Activated CD4-positive, alpha-beta T cell treated with anti-CD3 and anti-CD28 coated beads, Interleukin-2, amount 10 ng/mL, durations not matched to agents 7 days and 5 days (primary cell): ENCODE measurements at regions of chr4 and their contacts with region 1.

Region 1: DNA sequence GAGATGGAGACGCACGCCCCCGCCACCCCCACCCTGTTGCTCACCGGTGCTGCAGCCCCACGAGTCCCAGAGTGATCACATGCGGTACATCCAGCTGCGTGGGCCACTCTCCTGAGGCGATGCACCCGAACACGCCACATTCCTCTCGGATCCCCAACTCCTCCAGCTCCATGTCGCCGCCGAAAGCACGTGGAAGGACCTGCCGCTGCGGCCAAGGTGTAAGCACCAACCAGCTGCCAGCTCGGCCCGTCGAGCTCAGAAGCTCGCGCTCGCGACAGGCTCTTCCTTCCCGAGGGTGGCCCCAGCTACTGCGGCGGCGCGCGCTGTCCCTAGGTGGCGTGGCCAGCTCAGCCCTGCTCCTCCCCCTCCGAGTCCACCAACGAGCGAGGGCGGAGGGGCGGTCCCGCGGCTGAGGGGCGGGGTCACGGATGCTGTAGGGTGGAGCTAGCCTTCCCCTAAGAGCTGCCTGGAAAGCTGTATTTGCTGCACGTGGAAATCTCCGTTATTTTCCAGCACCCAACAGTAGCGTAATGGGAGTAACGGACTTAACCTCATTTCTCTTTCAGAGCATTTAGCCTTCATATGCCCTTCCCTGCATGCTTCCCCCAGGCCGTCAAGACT is at the start of gene PPAT:
- DNase-seq: peak; percentile 98
- H3K4me3 Mint-ChIP-seq: peak within 1 kb of the TSS; percentile 86
- H3K27ac Mint-ChIP-seq: peak within 1 kb of the TSS; percentile 93
- H3K4me1 Mint-ChIP-seq: peaks cover 49% of the 10 kb centered on the region
- H3K27me3 Mint-ChIP-seq: no peaks in the 10 kb centered on the region
- total RNA-seq, gene PPAT: 24.3 to 24.7 TPM

Region 2: DNA sequence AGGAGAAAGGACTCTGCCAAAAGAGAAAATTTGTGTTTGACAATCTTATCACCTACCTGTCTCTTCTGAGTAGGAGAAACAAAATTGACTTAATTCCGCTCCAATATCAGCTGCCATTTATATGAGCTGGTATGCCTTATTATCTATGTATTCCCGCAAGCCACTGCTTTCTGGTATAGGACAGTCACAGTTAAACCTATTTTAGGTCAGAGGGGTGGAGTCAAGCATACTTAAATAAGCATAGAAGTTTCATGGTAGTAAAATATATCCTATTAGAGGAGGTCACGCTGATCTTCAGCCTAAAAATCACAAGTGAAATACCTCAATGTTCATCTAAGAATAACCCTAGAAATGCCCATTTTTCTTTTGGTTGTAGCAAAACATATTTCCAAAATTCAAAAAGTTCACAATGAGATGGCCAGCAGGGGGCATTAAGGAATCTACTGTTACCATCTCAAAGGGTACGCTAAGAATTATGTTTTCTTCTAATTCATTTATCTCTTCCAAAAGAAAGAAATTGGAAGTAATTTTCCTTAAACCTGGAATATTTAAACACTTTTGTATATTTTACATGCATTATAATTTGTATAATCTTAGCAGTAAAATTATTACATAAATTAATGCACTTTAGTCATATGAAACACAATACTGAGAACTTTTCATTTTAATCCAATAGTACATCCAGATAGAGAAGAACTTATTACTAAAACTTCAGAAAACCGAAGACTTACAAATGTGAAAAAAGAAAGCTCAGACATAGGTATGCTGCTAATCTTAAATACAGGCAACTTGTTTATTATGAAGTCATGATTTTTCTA is 10.5 kb before region 1 on chr4:
- CTCF ChIA-PET with region 1: interaction called, 19 read pairs
- POLR2A ChIA-PET with region 1: interaction called, 9 read pairs
- DNase-seq: peak; percentile 53
- H3K4me3 Mint-ChIP-seq: no peak overlapping the region
- H3K27ac Mint-ChIP-seq: no peak overlapping the region
- H3K4me1 Mint-ChIP-seq: peaks cover 20% of the 10 kb centered on the region
- H3K27me3 Mint-ChIP-seq: no peaks in the 10 kb centered on the region

Region 3: DNA sequence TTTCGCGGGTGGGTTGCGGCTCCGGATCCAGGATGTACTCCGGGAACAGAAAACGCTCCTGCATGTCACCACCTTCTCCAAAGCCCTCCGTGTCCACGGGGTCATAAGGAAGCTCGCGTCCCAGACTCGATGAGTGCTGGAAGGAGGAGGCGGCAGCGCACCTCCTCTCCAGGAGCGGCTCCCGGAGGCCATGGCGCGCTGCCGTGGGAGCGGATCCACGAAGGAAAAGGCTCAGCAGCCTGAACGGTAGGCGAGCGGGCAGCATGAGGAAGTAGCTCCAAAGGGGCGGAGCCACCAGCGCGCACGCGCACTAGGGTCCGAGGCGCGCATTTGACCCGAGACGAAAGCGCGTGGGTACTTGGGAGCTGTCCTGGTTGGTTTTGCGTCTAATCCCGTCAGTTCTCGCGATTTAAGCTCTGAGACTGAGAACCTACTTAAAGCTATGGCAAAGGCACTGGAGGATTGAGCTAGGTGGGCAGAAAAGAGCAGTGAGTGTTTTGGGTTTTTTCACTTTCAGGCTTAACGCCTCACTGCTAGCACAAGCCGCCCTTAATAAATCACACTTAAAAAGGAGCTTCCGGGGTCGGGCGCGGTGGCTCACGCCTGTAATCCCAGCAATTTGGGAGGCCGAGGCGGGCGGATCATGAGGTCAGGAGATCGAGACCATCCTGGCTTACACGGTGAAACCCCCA is 542.1 kb after region 1 on chr4 and contains the start of gene NOA1:
- CTCF ChIA-PET with region 1: interaction called, 10 read pairs
- POLR2A ChIA-PET with region 1: no interaction called
- DNase-seq: peak; percentile 98
- H3K4me3 Mint-ChIP-seq: peak within 1 kb of the TSS; percentile 99
- H3K27ac Mint-ChIP-seq: peak within 1 kb of the TSS; percentile 98
- H3K4me1 Mint-ChIP-seq: peaks cover 51% of the 10 kb centered on the region
- H3K27me3 Mint-ChIP-seq: no peaks in the 10 kb centered on the region
- total RNA-seq, gene NOA1: 21.7 to 24.7 TPM